Activated CD8-positive, alpha-beta T cell treated with anti-CD3 and anti-CD28 coated beads for 36 hours (primary cell): ENCODE measurements at regions of chr15 and their contacts with region 1.

Region 1: GRCh38 chr15:101501703-101502373 is 12.3 kb upstream of the PCSK6 start:
- DNase-seq: peak; percentile 79
- ATAC-seq: peak; percentile 93
- H3K4me3 Mint-ChIP-seq: peak overlapping the region; percentile 39
- H3K27ac Mint-ChIP-seq: peak overlapping the region; percentile 11
- H3K4me1 Mint-ChIP-seq: peaks cover 18% of the 10 kb centered on the region
- H3K27me3 Mint-ChIP-seq: peaks cover 19% of the 10 kb centered on the region
- CTCF ChIP-seq: peak; percentile 78

Region 2: GRCh38 chr15:101305820-101306255 is 196.0 kb before region 1 on chr15:
- CTCF ChIA-PET with region 1: interaction called, 27 read pairs
- POLR2A ChIA-PET with region 1: no interaction called
- intact Hi-C with region 1: no loop called
- DNase-seq: no peak
- ATAC-seq: no peak
- H3K4me3 Mint-ChIP-seq: no peak overlapping the region
- H3K27ac Mint-ChIP-seq: no peak overlapping the region
- H3K4me1 Mint-ChIP-seq: no peaks in the 10 kb centered on the region
- H3K27me3 Mint-ChIP-seq: no peaks in the 10 kb centered on the region
- CTCF ChIP-seq: no peak

Region 3: DNA sequence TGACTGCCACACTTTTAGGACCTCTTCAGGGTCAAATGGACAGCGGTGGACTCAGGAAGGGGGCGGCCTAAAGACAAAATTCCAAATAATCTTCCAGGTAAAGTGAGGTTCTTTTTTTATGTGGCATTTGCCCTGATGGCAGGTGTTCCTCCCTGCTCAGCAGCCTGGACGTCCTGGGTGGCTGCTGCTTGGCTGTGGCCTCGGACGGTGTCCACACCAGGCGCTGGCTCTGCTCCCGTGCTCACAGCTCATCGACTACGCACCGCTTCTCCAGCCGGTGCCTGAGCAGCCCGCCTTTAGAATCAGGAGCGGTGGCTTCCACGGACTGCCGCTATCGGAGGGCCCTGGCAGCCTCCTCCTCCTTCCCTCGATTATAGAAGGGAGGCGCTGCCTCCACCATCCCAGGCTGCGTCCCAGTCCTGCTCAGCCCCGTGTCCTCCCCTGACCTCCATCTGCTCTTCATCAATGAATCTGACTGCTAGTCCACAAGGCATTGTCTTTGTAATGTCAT is 54.2 kb before region 1 on chr15:
- CTCF ChIA-PET with region 1: no interaction called
- POLR2A ChIA-PET with region 1: no interaction called
- intact Hi-C with region 1: no loop called
- DNase-seq: no peak
- ATAC-seq: no peak
- H3K4me3 Mint-ChIP-seq: no peak overlapping the region
- H3K27ac Mint-ChIP-seq: no peak overlapping the region
- H3K4me1 Mint-ChIP-seq: peaks cover 19% of the 10 kb centered on the region
- H3K27me3 Mint-ChIP-seq: peaks cover 10% of the 10 kb centered on the region
- CTCF ChIP-seq: no peak

Region 4: GRCh38 chr15:101476756-101477155 is 25.1 kb before region 1 on chr15:
- CTCF ChIA-PET with region 1: no interaction called
- POLR2A ChIA-PET with region 1: no interaction called
- intact Hi-C with region 1: no loop called
- DNase-seq: no peak
- ATAC-seq: no peak
- H3K4me3 Mint-ChIP-seq: no peak overlapping the region
- H3K27ac Mint-ChIP-seq: no peak overlapping the region
- H3K4me1 Mint-ChIP-seq: no peaks in the 10 kb centered on the region
- H3K27me3 Mint-ChIP-seq: peaks cover 3% of the 10 kb centered on the region
- CTCF ChIP-seq: no peak

Region 5: GRCh38 chr15:101514318-101514717 is 12.5 kb after region 1 on chr15:
- CTCF ChIA-PET with region 1: interaction called, 10 read pairs
- POLR2A ChIA-PET with region 1: no interaction called
- intact Hi-C with region 1: no loop called
- DNase-seq: no peak
- ATAC-seq: no peak
- H3K4me3 Mint-ChIP-seq: no peak overlapping the region
- H3K27ac Mint-ChIP-seq: no peak overlapping the region
- H3K4me1 Mint-ChIP-seq: no peaks in the 10 kb centered on the region
- H3K27me3 Mint-ChIP-seq: peaks cover 6% of the 10 kb centered on the region
- CTCF ChIP-seq: no peak

Region 6: DNA sequence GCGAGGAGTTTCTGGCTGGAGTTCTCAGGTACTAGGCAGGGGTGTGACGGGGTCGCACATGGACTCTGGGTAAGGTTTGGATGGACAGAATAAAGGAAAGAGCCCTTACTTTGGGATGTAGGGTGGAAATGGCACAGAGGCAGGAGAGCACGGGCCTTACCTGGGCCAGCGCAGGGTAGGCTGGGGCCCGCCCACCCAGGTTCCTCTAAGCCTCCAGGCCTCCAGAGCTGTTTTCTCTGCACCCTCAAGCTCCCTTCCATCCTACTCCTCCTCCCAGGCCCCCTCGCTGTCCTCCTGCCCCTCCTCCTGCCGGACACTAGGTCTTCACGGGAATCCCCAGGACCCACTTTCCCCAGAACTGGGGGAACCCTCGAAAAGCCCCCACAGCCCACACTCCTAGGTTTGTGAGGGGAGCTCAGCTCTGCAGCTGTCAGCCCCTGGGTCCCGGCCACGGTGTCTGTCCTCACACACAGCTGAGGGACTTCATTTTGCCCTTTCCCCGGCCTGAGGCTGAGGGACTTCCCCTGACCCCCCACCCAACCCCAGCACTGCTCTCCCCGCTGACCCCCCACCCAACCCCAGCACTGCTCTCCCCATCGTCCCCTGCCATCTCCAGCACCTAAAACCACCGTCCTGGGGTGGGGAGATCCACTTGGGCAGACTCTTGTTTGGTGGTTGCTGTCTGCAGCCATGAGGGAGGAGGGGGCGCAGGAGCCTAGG is 40.6 kb after region 1 on chr15:
- CTCF ChIA-PET with region 1: no interaction called
- POLR2A ChIA-PET with region 1: no interaction called
- intact Hi-C with region 1: no loop called
- DNase-seq: no peak
- ATAC-seq: no peak
- H3K4me3 Mint-ChIP-seq: no peak overlapping the region
- H3K27ac Mint-ChIP-seq: no peak overlapping the region
- H3K4me1 Mint-ChIP-seq: no peaks in the 10 kb centered on the region
- H3K27me3 Mint-ChIP-seq: peaks cover 2% of the 10 kb centered on the region
- CTCF ChIP-seq: no peak